Mammary epithelial cell (primary cell): ENCODE measurements at regions of chr2 and their contacts with region 1.

Region 1: GRCh38 chr2:118061135-118061955 is 26.9 kb upstream of the INSIG2 start:
- DNase-seq: peak; percentile 72
- H3K4me3 ChIP-seq: no peak overlapping the region
- H3K27ac ChIP-seq: no peak overlapping the region
- H3K4me1 ChIP-seq: peaks cover 12% of the 10 kb centered on the region
- H3K27me3 ChIP-seq: no peaks in the 10 kb centered on the region
- CTCF ChIP-seq: peak; percentile 44 to 73

Region 2: GRCh38 chr2:118032169-118033013 is 29.0 kb before region 1 on chr2:
- CTCF ChIA-PET with region 1: no interaction called
- dilution Hi-C with region 1: no loop called
- in situ Hi-C with region 1: no loop called
- intact Hi-C with region 1: loop called (anchors 1 kb)
- DNase-seq: peak; percentile 23
- H3K4me3 ChIP-seq: no peak overlapping the region
- H3K27ac ChIP-seq: no peak overlapping the region
- H3K4me1 ChIP-seq: no peaks in the 10 kb centered on the region
- H3K27me3 ChIP-seq: peaks cover 2% of the 10 kb centered on the region
- CTCF ChIP-seq: peak; percentile 68 to 74

Region 3: GRCh38 chr2:118148809-118149208 is 87.5 kb after region 1 on chr2:
- CTCF ChIA-PET with region 1: no interaction called
- dilution Hi-C with region 1: no loop called
- in situ Hi-C with region 1: no loop called
- intact Hi-C with region 1: loop called (anchors 2 kb)
- DNase-seq: no peak
- H3K4me3 ChIP-seq: no peak overlapping the region
- H3K27ac ChIP-seq: no peak overlapping the region
- H3K4me1 ChIP-seq: peaks cover 4% of the 10 kb centered on the region
- H3K27me3 ChIP-seq: no peaks in the 10 kb centered on the region
- CTCF ChIP-seq: peak; percentile 10 to 47